GM12878 (cell line): ENCODE measurements at regions of chrX and their contacts with region 1.

Region 1: DNA sequence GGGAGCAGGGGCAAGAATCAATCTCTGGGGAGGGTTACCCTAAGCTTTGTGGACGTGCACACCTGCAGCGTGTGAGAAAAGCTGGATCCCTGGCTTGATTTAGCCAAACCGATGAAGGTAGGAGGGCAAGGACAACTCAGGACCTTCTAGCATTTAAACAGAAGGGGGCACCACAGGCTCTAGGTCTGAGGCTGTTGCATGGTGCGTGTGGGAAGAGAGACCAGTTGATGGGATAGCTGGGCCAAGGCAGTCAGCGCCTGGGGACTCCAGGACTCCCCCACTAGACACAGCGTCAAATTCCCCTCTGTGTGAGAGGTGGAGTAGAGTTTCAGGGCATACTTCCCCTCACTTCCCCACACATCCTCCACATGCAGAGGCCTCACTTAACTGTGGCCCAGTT is 4.3 kb downstream of the GABRQ start:
- DNase-seq: no peak
- ATAC-seq: peak; percentile 74
- H3K4me3 ChIP-seq: no peak overlapping the region
- H3K27ac ChIP-seq: no peak overlapping the region
- H3K4me1 ChIP-seq: no peaks in the 10 kb centered on the region; the same call in 1 of the 2 replicates
- H3K27me3 ChIP-seq: no peaks in the 10 kb centered on the region; a peak in 1 of 4 replicates
- CTCF ChIP-seq: peak in 2 of 3 experiments; percentile 22 to 36; a peak in 2 of 6 replicates
- EP300 ChIP-seq: no peak
- POLR2A ChIP-seq: no peak
- RAD21 ChIP-seq: peak; percentile 59

Region 2: DNA sequence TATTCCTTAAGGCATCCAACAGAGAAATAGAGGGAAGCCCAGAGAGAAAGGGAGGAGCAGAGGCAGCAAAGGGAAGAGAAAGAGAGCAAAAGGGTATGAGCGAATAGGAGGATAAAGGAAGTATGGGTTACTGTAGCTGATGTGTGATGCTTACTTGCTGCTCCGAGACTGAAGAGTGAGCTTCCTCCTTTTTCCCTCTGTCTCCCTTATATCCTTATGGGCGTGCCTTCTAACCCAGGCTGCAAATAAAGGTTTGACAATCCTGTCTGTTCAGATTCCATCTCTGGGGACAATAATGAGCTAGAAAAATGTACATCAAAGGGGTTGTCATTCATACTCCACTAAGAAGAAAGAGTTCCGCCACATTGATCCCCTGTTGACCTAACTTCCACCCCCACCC is 190.4 kb before region 1 on chrX:
- CTCF ChIA-PET with region 1: no interaction called
- POLR2A ChIA-PET with region 1: no interaction called
- RAD21 ChIA-PET with region 1: no interaction called
- SMC1A ChIA-PET with region 1: no interaction called
- in situ Hi-C with region 1: no loop called
- intact Hi-C with region 1: no loop called
- DNase-seq: no peak
- ATAC-seq: no peak
- H3K4me3 ChIP-seq: no peak overlapping the region
- H3K27ac ChIP-seq: no peak overlapping the region
- H3K4me1 ChIP-seq: no peaks in the 10 kb centered on the region
- H3K27me3 ChIP-seq: no peaks in the 10 kb centered on the region
- CTCF ChIP-seq: no peak
- EP300 ChIP-seq: no peak
- POLR2A ChIP-seq: no peak
- RAD21 ChIP-seq: no peak

Region 3: GRCh38 chrX:152813206-152813605 is 171.2 kb after region 1 on chrX:
- CTCF ChIA-PET with region 1: interaction called, 26 read pairs
- POLR2A ChIA-PET with region 1: no interaction called
- RAD21 ChIA-PET with region 1: interaction called, 15 read pairs
- SMC1A ChIA-PET with region 1: interaction called, 7 read pairs
- in situ Hi-C with region 1: loop called (anchors 25 kb)
- intact Hi-C with region 1: loop called (anchors 1 kb)
- DNase-seq: no peak
- ATAC-seq: no peak
- H3K4me3 ChIP-seq: no peak overlapping the region
- H3K27ac ChIP-seq: no peak overlapping the region
- H3K4me1 ChIP-seq: no peaks in the 10 kb centered on the region
- H3K27me3 ChIP-seq: no peaks in the 10 kb centered on the region
- CTCF ChIP-seq: no peak
- EP300 ChIP-seq: no peak
- POLR2A ChIP-seq: no peak
- RAD21 ChIP-seq: no peak

Region 4: DNA sequence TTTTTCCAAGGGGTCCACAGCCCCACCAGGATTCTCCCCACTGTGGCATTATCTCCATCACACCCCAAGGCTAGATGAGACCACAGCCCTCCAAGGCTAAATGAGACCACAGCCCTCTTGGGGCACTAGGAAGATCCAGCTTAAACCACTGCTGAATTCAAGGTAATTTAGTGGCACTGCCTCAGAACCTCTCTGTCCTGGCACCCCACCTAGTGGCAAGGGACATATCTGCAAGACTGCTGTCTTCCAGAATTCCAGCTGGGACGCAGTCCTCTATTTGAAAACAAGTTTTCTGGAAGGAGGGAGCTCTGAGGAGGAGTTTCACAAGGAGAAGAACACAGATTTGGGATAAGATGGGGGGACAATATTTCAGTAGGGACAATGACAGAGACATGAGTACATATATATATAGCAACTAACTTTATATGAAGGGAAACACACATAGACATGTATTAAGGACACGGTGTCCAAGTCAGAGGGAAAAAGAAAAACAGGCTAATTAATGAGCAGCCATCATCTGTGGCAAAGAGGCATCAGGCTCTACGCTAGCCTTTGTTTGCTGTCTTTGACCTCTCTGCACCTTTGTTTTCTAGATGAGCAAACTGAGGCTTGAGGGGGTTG is 179.3 kb after region 1 on chrX:
- CTCF ChIA-PET with region 1: interaction called, 26 read pairs
- POLR2A ChIA-PET with region 1: no interaction called
- RAD21 ChIA-PET with region 1: interaction called, 20 read pairs
- SMC1A ChIA-PET with region 1: interaction called, 7 read pairs
- in situ Hi-C with region 1: loop called (anchors 25 kb)
- intact Hi-C with region 1: loop called (anchors 1 kb)
- DNase-seq: no peak
- ATAC-seq: peak; percentile 67
- H3K4me3 ChIP-seq: no peak overlapping the region
- H3K27ac ChIP-seq: no peak overlapping the region
- H3K4me1 ChIP-seq: no peaks in the 10 kb centered on the region
- H3K27me3 ChIP-seq: no peaks in the 10 kb centered on the region
- CTCF ChIP-seq: peak; percentile 60 to 69 (median 66)
- EP300 ChIP-seq: no peak
- POLR2A ChIP-seq: no peak
- RAD21 ChIP-seq: peak; percentile 50